Calu3 (cell line): ENCODE measurements at regions of chr10 and their contacts with region 1.

Region 1: DNA sequence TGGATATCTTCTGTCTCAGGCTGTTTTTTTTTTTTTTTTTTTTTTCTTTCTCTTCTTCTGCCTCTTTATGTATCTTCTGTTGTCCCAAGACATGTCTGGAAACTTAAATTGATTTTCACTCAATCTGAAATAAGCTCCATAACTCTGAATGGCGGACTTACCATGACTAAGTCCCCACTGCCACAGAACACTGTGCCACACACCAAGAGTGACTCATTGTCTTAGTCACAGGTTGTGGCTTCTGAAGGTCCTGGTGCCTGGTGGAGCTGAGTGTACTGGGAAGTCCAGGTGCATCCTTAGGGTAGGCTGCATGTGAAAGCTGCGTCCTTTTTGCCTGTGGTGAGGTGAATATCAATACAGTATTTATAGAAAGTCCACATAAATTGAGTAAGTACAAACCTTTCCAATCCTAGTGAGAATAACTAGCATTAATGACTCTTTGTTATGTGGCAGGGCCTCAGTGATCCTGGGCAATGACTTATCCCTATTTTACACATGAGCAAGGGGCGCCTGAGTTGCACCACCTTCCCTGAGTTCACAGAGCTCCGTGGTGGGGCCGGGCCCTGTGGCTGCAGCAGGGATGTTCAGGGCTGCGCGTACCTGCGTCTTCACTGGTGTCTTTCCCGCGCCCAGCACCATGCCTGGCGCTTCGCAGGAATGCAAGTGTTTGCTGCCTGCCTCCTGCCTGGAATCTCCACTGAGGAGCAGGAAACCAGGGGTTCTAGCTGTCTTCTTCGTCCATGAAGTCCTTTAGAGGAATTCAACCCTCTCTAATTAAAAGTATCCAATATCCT is 4.3 kb downstream of the PFKP start:
- DNase-seq: peak; percentile 73
- H3K4me3 Mint-ChIP-seq: peak overlapping the region; percentile 42
- H3K27ac Mint-ChIP-seq: peak overlapping the region; percentile 78
- H3K4me1 Mint-ChIP-seq: peaks cover 60% of the 10 kb centered on the region
- H3K27me3 Mint-ChIP-seq: no peaks in the 10 kb centered on the region
- CTCF ChIP-seq: no peak

Region 2: GRCh38 chr10:2992401-2993198 is 79.0 kb before region 1 on chr10:
- CTCF ChIA-PET with region 1: no interaction called
- intact Hi-C with region 1: no loop called
- DNase-seq: no peak
- H3K4me3 Mint-ChIP-seq: no peak overlapping the region
- H3K27ac Mint-ChIP-seq: no peak overlapping the region
- H3K4me1 Mint-ChIP-seq: peaks cover 13% of the 10 kb centered on the region
- H3K27me3 Mint-ChIP-seq: peaks cover 16% of the 10 kb centered on the region
- CTCF ChIP-seq: no peak

Region 3: DNA sequence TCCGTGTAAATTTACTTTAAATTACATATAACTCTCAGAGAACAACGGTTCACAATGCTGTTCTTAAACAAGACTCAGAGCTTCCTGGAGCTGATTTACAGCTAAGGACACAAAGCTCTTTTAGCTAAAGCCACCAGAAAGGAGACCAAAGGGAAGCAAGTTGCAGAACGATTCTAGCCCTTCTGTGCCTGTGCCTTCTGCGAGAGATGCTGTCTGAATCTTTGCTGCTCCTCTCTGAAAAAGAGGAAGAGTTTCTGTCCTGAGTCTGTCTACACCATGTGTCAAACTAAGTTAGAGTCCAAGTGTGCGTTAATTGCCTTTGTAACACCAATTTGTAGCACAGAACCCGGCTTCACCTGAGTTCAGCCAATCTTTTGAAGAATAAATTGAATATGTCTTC is 46.3 kb before region 1 on chr10:
- CTCF ChIA-PET with region 1: no interaction called
- intact Hi-C with region 1: no loop called
- DNase-seq: no peak
- H3K4me3 Mint-ChIP-seq: no peak overlapping the region
- H3K27ac Mint-ChIP-seq: no peak overlapping the region
- H3K4me1 Mint-ChIP-seq: no peaks in the 10 kb centered on the region
- H3K27me3 Mint-ChIP-seq: peaks cover 65% of the 10 kb centered on the region
- CTCF ChIP-seq: no peak

Region 4: DNA sequence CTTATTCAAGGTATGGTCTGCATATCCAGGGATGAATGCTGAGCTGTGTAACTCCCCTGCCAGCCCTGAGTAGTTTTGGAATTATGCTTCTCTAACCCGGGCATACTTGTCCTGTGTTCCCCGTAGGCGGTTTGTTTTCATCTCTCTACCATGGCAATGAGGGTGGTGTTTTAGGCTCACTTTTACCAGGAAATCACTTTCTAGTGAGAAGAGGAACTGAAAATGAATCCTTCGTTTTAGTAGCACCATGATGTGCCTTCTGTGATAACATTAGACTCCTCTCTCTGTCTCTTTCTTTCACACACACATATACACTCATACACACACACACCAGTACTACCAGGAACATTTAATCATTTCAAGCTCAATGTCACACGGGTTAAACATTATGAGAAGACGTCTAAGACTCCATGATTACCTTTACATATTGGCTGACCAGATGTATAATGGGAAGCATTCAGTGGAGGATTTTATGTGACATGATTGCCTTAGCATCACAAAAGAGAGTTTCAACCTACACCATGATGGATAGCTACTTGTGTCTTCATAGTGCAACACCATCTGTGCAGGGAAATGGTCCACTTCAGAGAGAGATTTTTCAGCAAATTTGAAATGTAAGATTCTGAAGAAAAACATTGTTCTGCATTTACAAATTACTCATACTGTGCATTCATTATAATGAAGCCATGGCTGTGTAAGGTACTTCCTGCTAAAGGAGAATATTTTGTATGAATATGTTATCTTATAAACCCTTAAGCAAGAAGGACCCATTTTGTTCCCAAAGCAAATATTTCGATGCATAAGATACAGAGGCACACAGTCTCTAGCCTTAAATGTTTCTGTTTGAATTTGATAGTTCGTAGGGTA is 35.2 kb before region 1 on chr10:
- CTCF ChIA-PET with region 1: no interaction called
- intact Hi-C with region 1: no loop called
- DNase-seq: no peak
- H3K4me3 Mint-ChIP-seq: no peak overlapping the region
- H3K27ac Mint-ChIP-seq: no peak overlapping the region
- H3K4me1 Mint-ChIP-seq: no peaks in the 10 kb centered on the region
- H3K27me3 Mint-ChIP-seq: peaks cover 52% of the 10 kb centered on the region
- CTCF ChIP-seq: no peak

Region 5: GRCh38 chr10:3090914-3091787 is 19.5 kb after region 1 on chr10:
- CTCF ChIA-PET with region 1: interaction called, 18 read pairs
- intact Hi-C with region 1: no loop called
- DNase-seq: peak; percentile 77
- H3K4me3 Mint-ChIP-seq: peak overlapping the region; percentile 63
- H3K27ac Mint-ChIP-seq: peak overlapping the region; percentile 94
- H3K4me1 Mint-ChIP-seq: peaks cover 76% of the 10 kb centered on the region
- H3K27me3 Mint-ChIP-seq: no peaks in the 10 kb centered on the region
- CTCF ChIP-seq: no peak

Region 6: DNA sequence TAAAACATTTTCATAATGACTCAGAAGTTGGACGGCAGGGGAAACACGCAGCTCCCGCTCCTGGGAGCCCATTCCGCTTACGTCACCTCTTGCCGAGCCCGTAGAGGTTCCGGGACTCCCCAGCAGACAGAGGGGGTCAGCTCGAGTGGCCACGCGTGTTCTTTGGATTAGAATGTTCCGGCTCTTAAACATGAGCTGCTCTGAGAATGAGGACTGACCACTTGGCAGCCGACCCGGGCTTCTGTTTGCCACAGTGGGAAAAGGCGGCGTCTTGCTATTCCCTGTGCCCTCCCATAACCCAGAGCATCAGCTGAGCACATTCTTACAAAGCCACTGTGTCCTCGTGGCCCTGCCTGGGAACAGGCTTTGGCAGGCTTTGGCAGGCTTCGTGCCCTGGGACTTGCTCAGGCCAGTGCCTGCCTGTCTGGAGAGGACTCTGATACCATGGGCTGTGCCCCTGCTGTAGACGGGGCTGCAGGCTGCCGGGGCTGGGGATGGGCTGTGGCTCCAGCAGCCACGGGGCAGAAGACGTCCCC is 35.9 kb after region 1 on chr10:
- CTCF ChIA-PET with region 1: no interaction called
- intact Hi-C with region 1: loop called (anchors 5 kb)
- DNase-seq: peak; percentile 86
- H3K4me3 Mint-ChIP-seq: peak overlapping the region; percentile 59
- H3K27ac Mint-ChIP-seq: peak overlapping the region; percentile 95
- H3K4me1 Mint-ChIP-seq: peaks cover 18% of the 10 kb centered on the region
- H3K27me3 Mint-ChIP-seq: no peaks in the 10 kb centered on the region
- CTCF ChIP-seq: no peak